Adrenal gland (tissue), 19 donors: ENCODE measurements at regions of chr2 and their contacts with region 1.

Region 1: DNA sequence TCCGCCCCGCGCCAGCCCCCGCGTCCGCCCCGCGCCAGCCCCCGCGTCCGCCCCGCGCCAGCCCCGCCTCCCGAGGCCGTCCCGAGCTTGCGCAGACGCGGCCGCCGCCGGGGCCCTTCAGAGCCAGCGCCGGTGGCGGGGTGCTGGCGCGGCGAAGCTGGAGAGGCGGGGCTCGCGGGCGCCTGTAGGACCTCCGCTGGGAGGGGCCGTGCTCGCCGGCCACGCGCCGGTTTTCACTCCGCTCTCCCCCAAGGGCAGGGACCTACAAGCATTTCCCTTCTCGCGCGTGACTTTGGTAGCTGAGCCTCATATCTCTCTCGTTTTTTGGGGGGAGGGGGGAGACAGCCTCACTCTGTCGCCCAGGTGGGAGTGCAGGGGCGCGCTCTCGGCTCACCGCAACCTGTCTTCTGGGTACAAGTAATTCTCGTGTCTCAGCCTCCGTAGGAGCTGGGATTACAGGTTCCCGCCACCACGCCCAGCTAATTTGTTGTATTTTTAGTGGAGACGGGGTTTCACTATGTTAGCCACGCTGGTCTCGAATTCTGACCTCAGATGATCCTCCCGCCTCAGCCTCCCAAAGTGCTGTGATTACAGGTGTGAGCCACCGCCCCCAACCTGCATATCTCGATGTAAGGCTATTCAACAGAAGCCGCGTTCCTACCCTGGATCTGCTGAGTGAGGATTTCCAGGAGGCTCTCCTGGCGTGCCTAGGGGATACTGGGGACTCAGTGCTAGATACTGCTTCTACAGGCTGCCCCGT is at the start of gene ZNF514:
- DNase-seq: peak; percentile 71 to 87 (median 74)
- H3K4me3 ChIP-seq: peak within 1 kb of the TSS in 3 of 4 donors; percentile 60 to 92 (median 66)
- H3K27ac ChIP-seq: peak within 1 kb of the TSS in 4 of 5 donors; percentile 42 to 86 (median 72)
- H3K4me1 ChIP-seq: peaks cover 12 to 19% of the 10 kb centered on the region in 2 donors
- H3K27me3 ChIP-seq: no peaks in the 10 kb centered on the region
- CTCF ChIP-seq: no peak
- POLR2A ChIP-seq: peak in 1 of 2 donors; percentile 30
- total RNA-seq, gene ZNF514: 4.6 to 22.6 (median 16.8) TPM

Region 2: GRCh38 chr2:95076784-95077529 is 82.9 kb before region 1 on chr2:
- intact Hi-C with region 1: no loop called
- DNase-seq: peak; percentile 63 to 81 (median 74)
- H3K4me3 ChIP-seq: peak overlapping the region in 1 of 4 donors; percentile 52
- H3K27ac ChIP-seq: no peak overlapping the region
- H3K4me1 ChIP-seq: peaks cover 0 to 6% of the 10 kb centered on the region in 2 donors
- H3K27me3 ChIP-seq: peaks cover 26% of the 10 kb centered on the region
- CTCF ChIP-seq: peak; percentile 52 to 80 (median 60)
- POLR2A ChIP-seq: no peak

Region 3: DNA sequence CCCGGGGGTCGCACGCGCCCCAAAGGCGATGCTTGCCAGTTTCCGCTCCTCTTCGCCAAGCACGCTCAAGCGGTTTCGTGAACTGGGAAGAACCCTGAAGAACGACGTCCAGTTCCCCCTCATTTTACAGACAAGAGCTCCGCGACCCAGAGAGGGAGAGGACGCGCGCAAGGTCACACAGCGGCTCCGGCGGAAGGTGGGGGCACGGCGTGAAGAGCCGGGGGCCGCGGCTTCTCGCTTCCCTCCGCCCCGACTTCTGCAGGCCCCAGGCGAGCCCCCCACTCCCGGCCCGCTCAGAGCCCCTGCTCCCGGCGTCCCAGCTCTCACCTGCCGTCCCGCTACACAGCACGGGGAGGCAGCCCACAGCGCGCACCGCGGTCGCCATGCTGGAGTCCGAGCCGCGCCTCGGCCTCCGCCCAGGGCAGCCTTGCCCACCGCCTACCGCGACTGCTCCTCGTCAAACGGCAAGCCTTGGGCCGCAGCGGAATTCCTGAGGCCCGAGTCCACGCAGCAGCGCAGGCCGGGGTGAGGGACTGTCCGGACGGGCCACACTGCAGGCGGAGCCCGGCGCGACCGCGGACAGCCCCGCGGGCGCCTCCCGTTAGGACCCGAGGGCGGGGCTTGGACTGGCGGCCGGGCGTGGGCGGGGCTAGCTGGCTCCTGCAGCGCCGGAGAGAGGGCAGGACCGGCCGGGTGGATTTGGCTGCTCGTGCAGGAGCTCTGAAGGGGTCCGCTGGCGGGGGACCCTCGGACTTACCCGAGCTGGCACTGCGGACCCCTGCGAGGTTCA is 38.3 kb before region 1 on chr2 and contains the start of gene MRPS5:
- intact Hi-C with region 1: loop called in 1 of 2 experiments (anchors 5 kb)
- DNase-seq: peak; percentile 73 to 89 (median 85)
- H3K4me3 ChIP-seq: peak within 1 kb of the TSS; percentile 51 to 97 (median 96)
- H3K27ac ChIP-seq: peak within 1 kb of the TSS; percentile 57 to 99 (median 95)
- H3K4me1 ChIP-seq: peaks cover 8 to 27% of the 10 kb centered on the region in 2 donors
- H3K27me3 ChIP-seq: no peaks in the 10 kb centered on the region
- CTCF ChIP-seq: peak in 1 of 6 experiments; percentile 13
- POLR2A ChIP-seq: peak; percentile 42 to 75
- total RNA-seq, gene MRPS5: 41.0 to 99.0 (median 51.0) TPM

Region 4: GRCh38 chr2:95289253-95289652 is 129.4 kb after region 1 on chr2:
- intact Hi-C with region 1: no loop called
- DNase-seq: no peak
- H3K4me3 ChIP-seq: no peak overlapping the region
- H3K27ac ChIP-seq: no peak overlapping the region
- H3K4me1 ChIP-seq: no peaks in the 10 kb centered on the region
- H3K27me3 ChIP-seq: no peaks in the 10 kb centered on the region
- CTCF ChIP-seq: no peak
- POLR2A ChIP-seq: no peak

Region 5: DNA sequence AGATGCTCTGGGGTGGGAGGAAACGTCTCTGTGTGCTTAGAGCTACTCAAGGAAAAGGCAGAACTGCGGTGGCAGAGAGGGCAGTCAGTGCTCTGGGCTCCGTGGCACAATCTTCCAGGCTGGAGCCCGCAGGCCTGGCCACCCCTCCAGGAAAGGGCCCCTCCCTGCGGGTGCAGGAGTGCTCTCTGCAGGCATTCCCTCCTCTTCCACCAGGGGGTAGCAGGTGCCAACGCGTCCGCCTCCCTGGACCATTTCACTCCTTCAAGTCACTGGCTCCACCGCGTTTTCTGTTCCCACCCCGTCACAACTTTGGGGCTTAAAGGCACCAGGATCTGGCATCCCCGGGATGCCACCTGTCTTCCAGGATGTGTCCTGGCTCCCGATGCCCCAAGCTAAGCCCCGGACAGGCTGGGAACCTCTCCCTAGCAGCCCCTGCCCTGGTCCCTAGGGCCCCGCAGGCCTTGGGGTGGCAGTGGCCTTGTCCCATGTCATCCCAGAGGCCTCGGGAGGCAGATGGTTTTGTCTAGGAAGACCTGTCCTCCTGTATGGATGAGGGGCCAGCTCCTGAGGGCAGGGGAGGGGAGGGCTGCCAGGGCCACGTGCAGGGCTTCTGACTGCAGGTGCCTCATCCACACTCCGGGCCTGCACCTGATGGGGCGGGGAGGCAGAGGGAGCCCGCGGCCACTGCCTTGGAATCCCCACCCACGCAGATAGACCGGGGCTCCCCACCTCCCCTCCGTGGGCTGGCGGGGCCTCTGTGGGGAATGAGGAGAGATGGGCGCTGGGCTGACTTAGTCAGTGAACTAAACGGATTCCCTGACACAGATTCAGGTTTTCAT is 163.7 kb after region 1 on chr2:
- intact Hi-C with region 1: no loop called
- DNase-seq: peak in 1 of 7 donors; percentile 8
- H3K4me3 ChIP-seq: no peak overlapping the region
- H3K27ac ChIP-seq: no peak overlapping the region
- H3K4me1 ChIP-seq: no peaks in the 10 kb centered on the region
- H3K27me3 ChIP-seq: no peaks in the 10 kb centered on the region
- CTCF ChIP-seq: peak in 2 of 6 experiments; percentile 7 to 26
- POLR2A ChIP-seq: no peak